MCF 10A (cell line): ENCODE measurements at regions of chr1 and their contacts with region 1.

Region 1: DNA sequence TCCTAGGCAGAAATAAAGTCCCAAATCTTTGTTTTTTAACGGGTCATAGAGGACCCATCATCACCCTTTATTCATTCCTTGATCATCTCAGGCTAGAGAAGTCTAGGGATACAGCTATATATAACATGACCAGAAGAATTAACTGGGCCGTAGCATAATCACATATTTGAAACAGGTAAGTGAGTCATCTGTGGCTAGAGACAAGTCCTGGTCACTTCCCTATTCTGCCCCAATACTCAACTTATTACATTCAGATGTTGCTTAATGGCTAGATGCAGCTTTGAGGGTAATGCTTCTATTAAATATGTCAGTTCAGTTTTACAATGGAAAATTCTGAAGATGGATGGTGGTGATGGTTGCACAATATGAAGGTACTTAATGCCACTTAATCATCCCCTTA is 47.0 kb downstream of the EXO1 start:
- DNase-seq: no peak
- H3K4me3 Mint-ChIP-seq: no peak overlapping the region
- H3K27ac Mint-ChIP-seq: no peak overlapping the region
- H3K4me1 Mint-ChIP-seq: no peaks in the 10 kb centered on the region
- H3K27me3 Mint-ChIP-seq: no peaks in the 10 kb centered on the region
- CTCF ChIP-seq: no peak

Region 2: DNA sequence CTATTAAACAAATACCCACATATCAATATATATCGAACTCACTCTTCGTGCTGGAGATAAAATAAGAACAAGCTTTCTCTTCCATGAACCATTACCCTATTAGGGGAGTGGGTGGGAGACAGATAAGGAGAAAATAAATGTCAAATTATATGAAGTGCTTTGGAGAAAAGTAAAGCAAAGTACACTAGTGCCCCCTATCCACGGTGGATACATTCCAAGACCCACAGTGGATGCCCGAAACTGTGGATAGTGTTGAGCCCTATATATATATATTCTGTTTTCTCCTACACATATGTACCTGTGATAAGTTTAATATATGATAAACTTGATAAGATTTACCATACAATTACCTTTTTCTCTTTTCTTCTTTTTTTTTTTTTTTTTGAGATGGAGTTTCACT is 430.0 kb before region 1 on chr1:
- CTCF ChIA-PET with region 1: no interaction called
- POLR2A ChIA-PET with region 1: no interaction called
- intact Hi-C with region 1: no loop called
- DNase-seq: no peak
- H3K4me3 Mint-ChIP-seq: no peak overlapping the region
- H3K27ac Mint-ChIP-seq: no peak overlapping the region
- H3K4me1 Mint-ChIP-seq: peaks cover 7% of the 10 kb centered on the region
- H3K27me3 Mint-ChIP-seq: no peaks in the 10 kb centered on the region
- CTCF ChIP-seq: no peak

Region 3: DNA sequence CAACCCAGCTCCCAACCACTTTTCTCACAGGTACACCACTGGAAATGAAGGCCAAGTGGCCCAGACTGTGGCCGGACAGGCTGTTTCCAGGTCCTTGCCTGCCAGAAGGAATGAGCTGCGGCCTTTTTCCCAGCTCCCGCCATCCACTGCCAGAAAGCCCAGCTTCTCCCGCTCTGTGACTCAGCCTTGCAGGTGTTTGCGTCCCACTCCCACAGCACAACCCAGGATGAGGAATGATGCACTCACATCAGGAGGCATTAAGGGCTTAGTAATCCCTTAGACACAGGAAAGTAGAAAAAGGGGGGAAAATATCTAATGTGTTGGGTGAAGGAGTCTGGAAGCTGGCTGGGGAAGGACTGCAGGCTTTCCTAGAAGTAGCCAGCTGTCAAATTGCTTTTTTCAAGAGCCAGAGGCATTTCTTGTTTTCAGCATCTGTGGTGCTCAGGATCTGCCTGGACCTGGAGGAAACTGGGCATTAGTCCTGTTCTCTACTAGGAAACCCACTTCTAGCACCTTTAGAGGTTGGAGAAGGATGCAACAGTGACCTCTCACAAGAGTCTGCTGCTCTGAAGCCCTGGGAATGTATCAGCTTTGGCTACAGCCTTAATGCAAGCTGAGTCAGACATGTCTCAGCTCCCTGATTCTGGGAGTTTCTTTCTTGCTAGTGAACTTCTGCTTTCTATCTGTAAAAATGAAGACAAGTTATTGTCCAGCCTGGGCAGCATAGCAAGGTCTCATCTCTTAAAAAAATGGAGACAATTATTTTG is 117.1 kb after region 1 on chr1:
- CTCF ChIA-PET with region 1: interaction called, 255 read pairs
- POLR2A ChIA-PET with region 1: interaction called, 3 read pairs
- intact Hi-C with region 1: loop called (anchors 1 kb)
- DNase-seq: no peak
- H3K4me3 Mint-ChIP-seq: no peak overlapping the region
- H3K27ac Mint-ChIP-seq: no peak overlapping the region
- H3K4me1 Mint-ChIP-seq: no peaks in the 10 kb centered on the region
- H3K27me3 Mint-ChIP-seq: no peaks in the 10 kb centered on the region
- CTCF ChIP-seq: no peak